A673 (cell line): ENCODE measurements at regions of chr5 and their contacts with region 1.

Region 1: GRCh38 chr5:57779383-57780223 is 297.0 kb upstream of the ACTBL2 start:
- DNase-seq: peak; percentile 79
- H3K4me3 ChIP-seq: no peak overlapping the region
- H3K27ac ChIP-seq: no peak overlapping the region
- H3K4me1 ChIP-seq: no peaks in the 10 kb centered on the region
- H3K27me3 ChIP-seq: no peaks in the 10 kb centered on the region
- CTCF ChIP-seq: peak; percentile 67

Region 2: DNA sequence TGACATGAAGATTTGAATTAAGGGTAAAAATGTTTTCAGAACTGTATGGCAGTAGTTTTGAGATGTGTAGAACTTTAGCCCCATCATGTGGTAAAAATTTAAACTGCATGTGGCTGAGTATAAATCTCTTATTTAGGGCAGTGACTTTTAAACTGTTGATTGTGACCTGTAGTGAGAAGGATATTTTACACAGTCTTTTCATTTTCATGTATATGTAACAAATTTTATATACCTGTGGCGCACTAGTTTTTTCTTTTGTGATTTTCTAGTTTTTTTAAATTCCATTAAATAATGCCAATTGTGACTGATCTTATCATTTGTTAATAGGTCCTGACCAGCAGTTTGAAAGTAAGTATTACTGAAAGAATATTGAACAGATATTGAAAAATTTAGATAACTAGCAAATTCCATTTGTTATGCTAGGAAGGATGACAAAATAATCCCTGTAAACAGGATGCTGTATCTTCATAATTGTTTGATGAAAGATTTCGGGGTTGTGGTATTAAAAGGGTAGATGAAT is 558.5 kb before region 1 on chr5:
- CTCF ChIA-PET with region 1: no interaction called
- POLR2A ChIA-PET with region 1: no interaction called
- intact Hi-C with region 1: no loop called
- DNase-seq: peak; percentile 68
- H3K4me3 ChIP-seq: no peak overlapping the region
- H3K27ac ChIP-seq: no peak overlapping the region
- H3K4me1 ChIP-seq: peaks cover 3% of the 10 kb centered on the region
- H3K27me3 ChIP-seq: no peaks in the 10 kb centered on the region
- CTCF ChIP-seq: peak; percentile 84

Region 3: GRCh38 chr5:57298295-57298984 is 481.2 kb before region 1 on chr5:
- CTCF ChIA-PET with region 1: no interaction called
- POLR2A ChIA-PET with region 1: no interaction called
- intact Hi-C with region 1: loop called (anchors 2 kb)
- DNase-seq: peak; percentile 84
- H3K4me3 ChIP-seq: no peak overlapping the region
- H3K27ac ChIP-seq: no peak overlapping the region
- H3K4me1 ChIP-seq: peaks cover 6% of the 10 kb centered on the region
- H3K27me3 ChIP-seq: no peaks in the 10 kb centered on the region
- CTCF ChIP-seq: peak; percentile 79

Region 4: DNA sequence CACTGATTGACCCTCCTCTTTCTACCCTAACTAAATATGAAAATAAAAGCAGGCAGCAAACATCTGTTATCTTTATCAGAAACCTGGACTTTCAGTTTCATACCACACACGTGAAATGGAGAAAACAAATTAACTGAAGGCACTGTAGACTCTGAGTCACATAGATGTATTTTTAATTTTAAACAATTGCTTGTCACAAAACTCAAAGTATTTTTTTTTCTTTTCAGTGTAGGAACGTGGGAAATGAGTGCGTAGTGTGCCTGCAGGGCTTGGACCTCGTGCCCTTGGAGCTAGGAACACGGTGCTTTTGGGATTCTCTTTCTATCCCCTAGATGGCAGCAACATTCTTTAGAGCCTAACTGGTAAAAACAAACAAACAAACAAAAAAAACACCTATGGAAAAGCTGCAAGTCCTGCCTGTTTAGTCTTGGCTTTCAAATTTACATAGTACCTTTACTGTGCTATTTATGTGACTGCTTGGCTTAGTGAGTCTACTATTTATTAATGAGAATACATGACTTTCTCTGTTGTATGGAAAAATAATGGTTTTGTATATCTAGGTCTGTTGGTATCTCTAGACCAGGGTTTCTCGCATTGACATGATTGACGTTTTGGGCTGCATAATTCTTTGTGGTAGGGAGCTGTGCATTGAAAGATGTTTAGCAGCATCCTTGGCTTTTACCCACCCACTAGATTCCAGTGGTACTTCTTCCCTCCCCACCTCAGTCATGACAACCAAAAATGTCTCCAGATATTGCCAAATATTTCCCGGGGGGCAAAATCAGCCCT is 280.1 kb before region 1 on chr5:
- CTCF ChIA-PET with region 1: interaction called, 5 read pairs
- POLR2A ChIA-PET with region 1: interaction called, 4 read pairs
- intact Hi-C with region 1: loop called (anchors 10 kb)
- DNase-seq: peak; percentile 59
- H3K4me3 ChIP-seq: peak overlapping the region; percentile 19
- H3K27ac ChIP-seq: no peak overlapping the region
- H3K4me1 ChIP-seq: peaks cover 20% of the 10 kb centered on the region
- H3K27me3 ChIP-seq: no peaks in the 10 kb centered on the region
- CTCF ChIP-seq: peak; percentile 76

Region 5: GRCh38 chr5:57887851-57888621 is 108.4 kb after region 1 on chr5:
- CTCF ChIA-PET with region 1: no interaction called
- POLR2A ChIA-PET with region 1: no interaction called
- intact Hi-C with region 1: loop called (anchors 5 kb)
- DNase-seq: peak; percentile 49
- H3K4me3 ChIP-seq: no peak overlapping the region
- H3K27ac ChIP-seq: no peak overlapping the region
- H3K4me1 ChIP-seq: no peaks in the 10 kb centered on the region
- H3K27me3 ChIP-seq: no peaks in the 10 kb centered on the region
- CTCF ChIP-seq: peak; percentile 60

Region 6: DNA sequence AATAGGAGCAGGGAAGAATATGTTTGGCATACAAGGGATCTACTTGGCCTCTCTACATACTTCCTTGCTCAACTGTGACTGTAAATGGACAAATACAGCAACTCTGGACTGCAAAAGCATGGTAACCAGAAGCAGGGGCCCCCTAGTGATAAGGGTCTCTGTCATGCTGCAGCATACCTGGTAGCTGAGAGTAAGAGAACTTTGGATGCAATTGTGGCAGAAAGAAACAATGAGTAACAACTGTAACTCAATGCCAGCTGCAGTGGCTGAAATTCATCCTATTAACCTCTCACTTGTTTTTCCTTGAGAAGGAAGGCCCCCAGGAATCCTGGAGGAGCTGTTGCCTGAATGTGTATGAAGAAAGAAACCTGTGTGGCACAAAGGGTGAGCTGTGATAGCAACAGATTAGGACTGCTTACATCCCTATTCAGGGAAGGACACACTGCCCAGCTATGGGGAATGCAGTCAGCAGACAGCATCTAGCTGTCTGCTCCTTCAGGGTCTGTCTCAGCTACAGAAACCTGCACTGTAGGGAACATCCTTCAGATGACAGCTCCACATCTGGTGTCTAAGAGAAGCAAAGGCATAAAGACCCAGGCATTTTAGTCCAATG is 171.1 kb after region 1 on chr5:
- CTCF ChIA-PET with region 1: no interaction called
- POLR2A ChIA-PET with region 1: no interaction called
- intact Hi-C with region 1: loop called (anchors 10 kb)
- DNase-seq: no peak
- H3K4me3 ChIP-seq: no peak overlapping the region
- H3K27ac ChIP-seq: no peak overlapping the region
- H3K4me1 ChIP-seq: no peaks in the 10 kb centered on the region
- H3K27me3 ChIP-seq: peaks cover 6% of the 10 kb centered on the region
- CTCF ChIP-seq: no peak

Region 7: GRCh38 chr5:57976506-57976905 is 196.9 kb after region 1 on chr5:
- CTCF ChIA-PET with region 1: no interaction called
- POLR2A ChIA-PET with region 1: no interaction called
- intact Hi-C with region 1: no loop called
- DNase-seq: no peak
- H3K4me3 ChIP-seq: no peak overlapping the region
- H3K27ac ChIP-seq: no peak overlapping the region
- H3K4me1 ChIP-seq: no peaks in the 10 kb centered on the region
- H3K27me3 ChIP-seq: no peaks in the 10 kb centered on the region
- CTCF ChIP-seq: no peak

Region 8: DNA sequence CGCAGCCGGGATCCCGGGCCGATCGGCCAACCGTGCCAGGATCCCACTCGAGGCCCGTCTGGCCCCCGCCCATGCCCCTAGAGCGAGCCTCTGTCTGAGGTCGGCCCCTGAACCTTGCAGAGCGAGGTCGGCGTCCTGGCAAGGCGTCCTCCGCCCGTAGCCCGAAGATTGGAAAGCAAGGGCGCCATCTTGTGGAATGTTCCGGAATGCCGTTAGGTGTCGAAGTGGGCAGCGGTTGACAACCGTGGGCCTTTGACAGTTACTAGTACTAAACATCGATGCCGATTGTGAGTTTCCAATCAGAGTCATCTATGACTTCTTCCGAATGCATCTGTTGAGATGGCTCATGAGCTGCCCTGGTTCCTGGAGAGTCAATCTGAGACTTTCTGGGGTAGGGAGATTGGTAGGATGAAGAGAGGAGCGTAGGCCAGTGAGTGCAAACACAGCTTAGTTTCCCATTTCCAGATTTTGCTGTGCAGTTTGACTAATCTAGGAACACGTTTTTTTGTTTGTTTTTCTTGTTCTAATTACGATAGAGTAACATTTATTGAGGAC is 681.2 kb after region 1 on chr5:
- CTCF ChIA-PET with region 1: interaction called, 29 read pairs
- POLR2A ChIA-PET with region 1: no interaction called
- intact Hi-C with region 1: loop called (anchors 1 kb)
- DNase-seq: peak; percentile 86
- H3K4me3 ChIP-seq: peak overlapping the region; percentile 54
- H3K27ac ChIP-seq: peak overlapping the region; percentile 38
- H3K4me1 ChIP-seq: peaks cover 8% of the 10 kb centered on the region
- H3K27me3 ChIP-seq: peaks cover 24% of the 10 kb centered on the region
- CTCF ChIP-seq: peak; percentile 83